ENCODE measurements at regions of chr11 and their contacts with region 1.

Region 1: DNA sequence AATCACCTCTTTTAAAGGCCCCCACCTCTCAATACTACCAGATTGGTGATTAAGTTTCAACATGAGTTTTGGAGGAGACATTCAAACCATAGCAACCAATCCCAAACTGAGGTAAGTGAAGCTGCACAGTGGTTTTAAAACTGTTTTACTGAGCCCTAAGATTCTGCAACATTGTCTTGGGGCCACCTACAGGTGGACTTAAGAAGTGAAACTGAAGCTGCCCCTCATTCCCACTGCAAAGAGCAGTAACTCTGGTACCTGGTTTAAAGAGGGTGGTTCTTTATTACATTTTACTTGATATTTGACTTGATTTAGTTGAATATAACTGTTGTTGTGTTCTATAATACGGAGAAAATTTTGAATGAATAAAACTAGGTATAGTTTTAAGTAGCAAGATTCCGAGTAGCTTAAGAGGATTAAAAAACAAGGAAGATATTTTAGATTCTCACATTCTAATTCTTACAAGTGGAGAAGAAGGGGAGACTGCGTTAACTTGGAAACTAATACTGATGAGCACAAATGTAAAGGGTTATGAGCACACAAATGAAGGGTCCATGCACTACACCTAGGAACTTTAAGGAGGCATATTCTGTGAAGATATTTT is 26.7 kb downstream of the SYT9 start:
- DNase-seq: peak in 1 of 2 experiments; percentile 42
- H3K4me3 ChIP-seq: no peak overlapping the region
- H3K4me3 Mint-ChIP-seq: no peak overlapping the region
- H3K27ac Mint-ChIP-seq: no peak overlapping the region
- H3K4me1 ChIP-seq: no peaks in the 10 kb centered on the region
- H3K4me1 Mint-ChIP-seq: no peaks in the 10 kb centered on the region
- H3K27me3 ChIP-seq: no peaks in the 10 kb centered on the region
- H3K27me3 Mint-ChIP-seq: no peaks in the 10 kb centered on the region
- CTCF ChIP-seq: peak; percentile 67 to 74

Region 2: DNA sequence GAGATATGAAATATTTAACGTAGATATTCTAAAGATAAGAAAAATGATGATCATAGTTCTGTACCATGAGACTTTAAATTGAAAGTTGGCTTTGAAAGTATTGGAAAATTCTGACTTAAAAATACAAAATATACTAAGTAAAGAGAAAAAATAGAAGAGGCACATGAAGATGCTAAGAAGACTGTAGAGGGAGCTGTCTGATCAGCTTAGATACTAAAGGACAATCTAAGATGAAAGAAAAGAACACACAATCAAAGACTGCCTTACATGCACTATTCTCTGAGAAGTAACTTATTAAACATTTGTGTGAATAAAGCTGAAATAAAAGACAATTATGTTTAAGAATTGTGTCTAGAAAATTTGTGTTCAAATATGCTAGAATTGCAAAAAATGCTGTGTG is 134.5 kb before region 1 on chr11:
- CTCF ChIA-PET with region 1: interaction called, 6 read pairs
- POLR2A ChIA-PET with region 1: no interaction called
- intact Hi-C with region 1: loop called (anchors 1 kb)
- DNase-seq: no peak
- H3K4me3 ChIP-seq: no peak overlapping the region
- H3K4me3 Mint-ChIP-seq: no peak overlapping the region
- H3K27ac Mint-ChIP-seq: no peak overlapping the region
- H3K4me1 ChIP-seq: no peaks in the 10 kb centered on the region
- H3K4me1 Mint-ChIP-seq: no peaks in the 10 kb centered on the region
- H3K27me3 ChIP-seq: no peaks in the 10 kb centered on the region
- H3K27me3 Mint-ChIP-seq: peaks cover 6% of the 10 kb centered on the region
- CTCF ChIP-seq: peak; percentile 12 to 23

Region 3: GRCh38 chr11:7196396-7197146 is 81.8 kb before region 1 on chr11:
- CTCF ChIA-PET with region 1: no interaction called
- POLR2A ChIA-PET with region 1: interaction called, 13 read pairs
- intact Hi-C with region 1: no loop called
- DNase-seq: no peak
- H3K4me3 ChIP-seq: no peak overlapping the region
- H3K4me3 Mint-ChIP-seq: no peak overlapping the region
- H3K27ac Mint-ChIP-seq: no peak overlapping the region
- H3K4me1 ChIP-seq: no peaks in the 10 kb centered on the region
- H3K4me1 Mint-ChIP-seq: no peaks in the 10 kb centered on the region
- H3K27me3 ChIP-seq: no peaks in the 10 kb centered on the region
- H3K27me3 Mint-ChIP-seq: peaks cover 2% of the 10 kb centered on the region
- CTCF ChIP-seq: no peak

Region 4: GRCh38 chr11:7222619-7223018 is 55.8 kb before region 1 on chr11:
- CTCF ChIA-PET with region 1: no interaction called
- POLR2A ChIA-PET with region 1: no interaction called
- intact Hi-C with region 1: no loop called
- DNase-seq: no peak
- H3K4me3 ChIP-seq: no peak overlapping the region
- H3K4me3 Mint-ChIP-seq: no peak overlapping the region
- H3K27ac Mint-ChIP-seq: no peak overlapping the region
- H3K4me1 ChIP-seq: no peaks in the 10 kb centered on the region
- H3K4me1 Mint-ChIP-seq: no peaks in the 10 kb centered on the region
- H3K27me3 ChIP-seq: no peaks in the 10 kb centered on the region
- H3K27me3 Mint-ChIP-seq: peaks cover 9% of the 10 kb centered on the region
- CTCF ChIP-seq: no peak

Region 5: DNA sequence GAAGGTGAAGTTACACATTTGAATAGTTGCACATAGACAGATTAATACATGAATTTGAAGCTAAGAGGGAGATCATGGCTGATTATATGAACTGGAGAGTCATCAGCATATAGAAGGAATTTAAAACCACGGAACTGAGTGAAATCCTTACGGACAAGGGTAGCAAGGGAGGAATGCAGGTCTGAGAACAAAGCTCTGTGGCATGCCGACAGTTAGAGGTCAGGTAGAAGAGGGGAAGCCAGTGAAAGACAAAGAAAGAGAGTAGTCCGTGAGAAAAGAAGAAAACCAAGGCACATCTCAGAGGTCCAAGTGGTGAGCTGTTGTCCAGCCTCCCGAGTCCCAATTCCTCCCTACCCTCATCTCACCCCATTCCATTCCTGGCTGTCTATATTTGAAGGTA is 38.5 kb before region 1 on chr11:
- CTCF ChIA-PET with region 1: no interaction called
- POLR2A ChIA-PET with region 1: no interaction called
- intact Hi-C with region 1: no loop called
- DNase-seq: no peak
- H3K4me3 ChIP-seq: no peak overlapping the region
- H3K4me3 Mint-ChIP-seq: no peak overlapping the region
- H3K27ac Mint-ChIP-seq: no peak overlapping the region
- H3K4me1 ChIP-seq: no peaks in the 10 kb centered on the region
- H3K4me1 Mint-ChIP-seq: no peaks in the 10 kb centered on the region
- H3K27me3 ChIP-seq: peaks cover 1% of the 10 kb centered on the region; the same call in 1 of the 2 replicates
- H3K27me3 Mint-ChIP-seq: peaks cover 21% of the 10 kb centered on the region
- CTCF ChIP-seq: no peak

Region 6: GRCh38 chr11:7251836-7252682 is 26.4 kb before region 1 on chr11 and contains the start of gene SYT9:
- CTCF ChIA-PET with region 1: no interaction called
- POLR2A ChIA-PET with region 1: no interaction called
- intact Hi-C with region 1: no loop called
- DNase-seq: no peak
- H3K4me3 ChIP-seq: no peak within 1 kb of the TSS
- H3K4me3 Mint-ChIP-seq: no peak within 1 kb of the TSS
- H3K27ac Mint-ChIP-seq: no peak within 1 kb of the TSS
- H3K4me1 ChIP-seq: no peaks in the 10 kb centered on the region
- H3K4me1 Mint-ChIP-seq: no peaks in the 10 kb centered on the region
- H3K27me3 ChIP-seq: no peaks in the 10 kb centered on the region
- H3K27me3 Mint-ChIP-seq: peaks cover 9% of the 10 kb centered on the region
- CTCF ChIP-seq: no peak
- total RNA-seq, gene SYT9: not detected in 2 replicates

Region 7: GRCh38 chr11:7299393-7299792 is 21.0 kb after region 1 on chr11:
- CTCF ChIA-PET with region 1: no interaction called
- POLR2A ChIA-PET with region 1: no interaction called
- intact Hi-C with region 1: no loop called
- DNase-seq: no peak
- H3K4me3 ChIP-seq: no peak overlapping the region
- H3K4me3 Mint-ChIP-seq: no peak overlapping the region
- H3K27ac Mint-ChIP-seq: no peak overlapping the region
- H3K4me1 ChIP-seq: no peaks in the 10 kb centered on the region
- H3K4me1 Mint-ChIP-seq: no peaks in the 10 kb centered on the region
- H3K27me3 ChIP-seq: no peaks in the 10 kb centered on the region
- H3K27me3 Mint-ChIP-seq: peaks cover 4% of the 10 kb centered on the region
- CTCF ChIP-seq: no peak

Region 8: DNA sequence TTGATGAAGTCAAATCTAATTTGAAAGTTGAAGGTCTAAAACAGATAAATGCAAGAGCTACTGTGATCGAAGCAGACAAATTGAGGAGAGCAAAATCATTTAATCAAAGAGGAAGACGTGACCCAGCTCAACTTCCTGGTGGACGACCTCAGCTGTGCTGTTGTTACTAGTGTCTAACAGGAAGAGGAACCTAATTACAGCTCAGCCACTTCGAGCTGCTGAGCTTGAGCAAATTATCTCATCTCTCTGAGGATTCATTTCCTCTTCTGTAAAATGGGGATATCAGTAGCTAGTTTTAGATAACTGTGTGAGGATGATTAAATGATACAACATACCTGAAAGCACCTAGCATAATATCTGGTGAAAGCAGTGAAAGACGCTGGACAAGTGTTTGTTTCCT is 158.2 kb after region 1 on chr11:
- CTCF ChIA-PET with region 1: no interaction called
- POLR2A ChIA-PET with region 1: no interaction called
- intact Hi-C with region 1: loop called (anchors 10 kb)
- DNase-seq: no peak
- H3K4me3 ChIP-seq: no peak overlapping the region
- H3K4me3 Mint-ChIP-seq: no peak overlapping the region
- H3K27ac Mint-ChIP-seq: no peak overlapping the region
- H3K4me1 ChIP-seq: no peaks in the 10 kb centered on the region
- H3K4me1 Mint-ChIP-seq: no peaks in the 10 kb centered on the region
- H3K27me3 ChIP-seq: no peaks in the 10 kb centered on the region
- H3K27me3 Mint-ChIP-seq: peaks cover 30% of the 10 kb centered on the region
- CTCF ChIP-seq: no peak